Activated CD4-positive, alpha-beta T cell treated with anti-CD3 and anti-CD28 coated beads, Interleukin-2, amount 10 ng/mL, durations not matched to agents 7 days and 5 days (primary cell): ENCODE measurements at regions of chr17 and their contacts with region 1.

Region 1: DNA sequence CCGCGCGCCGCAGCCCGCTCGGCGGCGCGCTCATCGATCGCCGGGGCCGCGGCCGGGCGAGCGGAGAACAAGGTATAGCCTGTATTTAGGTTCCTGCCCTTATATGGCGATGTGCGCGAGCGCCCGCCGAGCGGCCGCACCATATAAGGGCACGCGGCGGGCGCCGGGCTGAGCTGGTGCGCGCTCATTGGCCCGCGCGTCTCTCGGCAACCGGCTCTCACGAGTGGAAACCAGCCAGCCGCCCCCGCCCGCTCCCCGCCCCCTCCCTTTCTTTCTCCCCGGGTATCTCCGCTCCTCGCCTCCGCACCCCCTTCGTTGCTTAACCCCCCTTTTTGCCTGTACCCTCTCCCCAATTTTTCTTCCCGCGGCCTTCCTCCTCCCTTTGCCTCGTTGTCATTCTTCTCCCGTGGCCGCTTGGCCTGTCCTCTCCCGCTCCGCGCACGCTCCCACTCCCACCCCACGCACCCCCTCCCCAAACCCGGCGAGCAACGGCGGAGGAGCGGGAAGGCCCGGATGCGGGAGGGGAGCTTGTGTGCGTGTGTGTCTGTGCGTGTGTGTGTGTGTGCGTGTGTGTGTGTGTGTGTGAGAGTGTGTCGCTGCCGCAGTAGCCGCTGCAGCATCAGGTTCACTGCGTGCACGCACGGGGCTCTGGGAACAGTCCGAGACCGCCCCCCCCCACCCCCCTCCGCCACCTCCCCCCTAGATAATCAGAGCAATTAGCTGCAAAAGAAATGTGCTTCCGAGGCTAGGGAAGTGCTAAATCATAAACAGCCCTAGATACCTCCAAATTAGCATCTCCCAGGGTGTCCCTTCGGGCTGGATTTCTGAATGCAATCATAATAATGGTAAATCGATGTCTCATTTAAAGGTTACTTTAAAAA is 13.5 kb upstream of the CBX8 start:
- DNase-seq: peak; percentile 79
- H3K4me3 Mint-ChIP-seq: no peak overlapping the region
- H3K27ac Mint-ChIP-seq: no peak overlapping the region
- H3K4me1 Mint-ChIP-seq: peaks cover 34% of the 10 kb centered on the region
- H3K27me3 Mint-ChIP-seq: peaks cover 65% of the 10 kb centered on the region

Region 2: GRCh38 chr17:79651761-79652160 is 158.6 kb before region 1 on chr17:
- CTCF ChIA-PET with region 1: no interaction called
- POLR2A ChIA-PET with region 1: no interaction called
- DNase-seq: no peak
- H3K4me3 Mint-ChIP-seq: no peak overlapping the region
- H3K27ac Mint-ChIP-seq: no peak overlapping the region
- H3K4me1 Mint-ChIP-seq: no peaks in the 10 kb centered on the region
- H3K27me3 Mint-ChIP-seq: peaks cover 11% of the 10 kb centered on the region

Region 3: DNA sequence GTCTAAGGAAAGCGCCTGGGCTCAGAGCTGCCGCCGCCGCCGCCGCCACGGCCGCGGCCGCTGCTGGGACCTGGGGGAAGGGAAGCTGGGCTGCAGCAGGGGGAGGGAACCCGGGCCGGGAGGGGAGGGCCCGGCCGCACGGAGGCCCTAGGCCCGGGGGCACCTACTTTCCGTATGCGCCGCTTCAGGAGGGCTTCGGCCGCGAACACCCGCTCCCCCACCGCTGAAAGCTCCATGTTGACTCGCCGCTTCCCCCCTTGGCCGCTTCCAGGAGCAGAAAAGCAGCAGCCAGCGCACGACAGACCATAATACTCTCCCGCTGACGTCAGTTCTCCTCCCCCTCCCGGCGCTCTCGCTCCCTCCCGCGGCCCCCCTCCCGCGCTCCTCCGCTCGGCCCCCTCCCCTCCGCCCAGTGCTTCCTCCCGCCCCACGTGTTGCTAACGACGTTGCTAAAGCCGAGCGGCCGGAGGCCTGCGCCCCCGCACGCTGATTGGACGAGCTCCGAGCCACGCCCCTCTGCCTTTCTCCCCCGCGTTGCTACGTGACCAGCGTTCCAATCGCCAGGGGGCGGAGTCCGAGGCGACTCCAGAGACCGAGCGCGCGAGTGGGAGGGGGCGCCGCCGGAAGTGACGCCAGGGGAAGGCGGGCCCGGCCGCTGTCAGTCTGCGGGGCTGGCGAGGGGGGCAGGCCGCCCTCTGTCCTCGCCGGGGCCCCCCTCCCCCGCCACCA is 13.4 kb before region 1 on chr17 and contains the start of gene CBX8:
- CTCF ChIA-PET with region 1: interaction called, 25 read pairs
- POLR2A ChIA-PET with region 1: no interaction called
- DNase-seq: peak; percentile 100
- H3K4me3 Mint-ChIP-seq: peak within 1 kb of the TSS; percentile 85
- H3K27ac Mint-ChIP-seq: peak within 1 kb of the TSS; percentile 88
- H3K4me1 Mint-ChIP-seq: peaks cover 31% of the 10 kb centered on the region
- H3K27me3 Mint-ChIP-seq: peaks cover 50% of the 10 kb centered on the region
- total RNA-seq, gene CBX8: 4.3 to 6.4 TPM